ENCODE measurements at regions of chr9 and their contacts with region 1.

Region 1: GRCh38 chr9:83334320-83334719 is 203.9 kb downstream of the FRMD3 start:
- DNase-seq: peak; percentile 44
- CTCF ChIP-seq: peak; percentile 91

Region 2: DNA sequence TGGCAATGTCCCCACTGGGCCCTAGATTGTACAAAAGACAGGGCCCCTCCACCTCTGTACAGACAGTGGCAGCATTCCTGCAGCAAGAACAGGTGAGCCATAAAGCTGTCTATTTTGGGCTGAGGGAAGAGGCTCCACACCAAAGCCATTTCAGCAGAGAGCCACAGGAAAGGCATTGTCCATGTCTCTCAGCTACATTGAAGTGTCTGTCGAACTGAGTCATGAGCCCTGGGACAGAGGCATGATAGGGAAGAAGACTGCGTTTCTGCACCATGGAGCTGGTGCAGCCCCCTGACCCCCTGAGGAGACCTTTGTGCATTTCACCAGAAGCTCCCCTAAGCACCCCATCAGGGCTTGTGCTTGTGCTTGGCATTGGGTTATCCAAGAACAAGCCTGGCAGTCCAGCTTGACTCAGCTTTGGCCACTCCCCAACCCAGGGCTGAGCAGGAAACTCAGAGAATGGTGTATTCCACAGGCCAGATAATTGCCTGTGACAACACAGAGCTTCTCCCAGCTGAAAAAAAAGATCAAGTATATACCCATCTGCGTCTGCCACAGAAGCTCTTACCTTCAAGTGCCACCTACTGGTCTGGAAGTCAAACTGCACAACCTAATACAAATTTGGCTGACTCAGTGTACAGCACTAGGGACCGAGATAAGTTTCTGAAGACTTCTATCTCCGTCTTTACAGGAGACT is 209.8 kb after region 1 on chr9:
- in situ Hi-C with region 1: loop called (anchors 10 kb)
- DNase-seq: peak; percentile 62
- CTCF ChIP-seq: peak; percentile 60